ENCODE measurements at regions of chr12 and their contacts with region 1.

Region 1: GRCh38 chr12:104863296-104863948 is 94.7 kb downstream of the SLC41A2 start:
- DNase-seq: no peak
- ATAC-seq: no peak
- H3K4me3 ChIP-seq: no peak overlapping the region
- H3K27ac ChIP-seq: no peak overlapping the region
- H3K4me1 ChIP-seq: no peaks in the 10 kb centered on the region
- H3K27me3 ChIP-seq: no peaks in the 10 kb centered on the region
- CTCF ChIP-seq: no peak
- EP300 ChIP-seq: no peak
- POLR2A ChIP-seq: no peak
- RAD21 ChIP-seq: no peak

Region 2: DNA sequence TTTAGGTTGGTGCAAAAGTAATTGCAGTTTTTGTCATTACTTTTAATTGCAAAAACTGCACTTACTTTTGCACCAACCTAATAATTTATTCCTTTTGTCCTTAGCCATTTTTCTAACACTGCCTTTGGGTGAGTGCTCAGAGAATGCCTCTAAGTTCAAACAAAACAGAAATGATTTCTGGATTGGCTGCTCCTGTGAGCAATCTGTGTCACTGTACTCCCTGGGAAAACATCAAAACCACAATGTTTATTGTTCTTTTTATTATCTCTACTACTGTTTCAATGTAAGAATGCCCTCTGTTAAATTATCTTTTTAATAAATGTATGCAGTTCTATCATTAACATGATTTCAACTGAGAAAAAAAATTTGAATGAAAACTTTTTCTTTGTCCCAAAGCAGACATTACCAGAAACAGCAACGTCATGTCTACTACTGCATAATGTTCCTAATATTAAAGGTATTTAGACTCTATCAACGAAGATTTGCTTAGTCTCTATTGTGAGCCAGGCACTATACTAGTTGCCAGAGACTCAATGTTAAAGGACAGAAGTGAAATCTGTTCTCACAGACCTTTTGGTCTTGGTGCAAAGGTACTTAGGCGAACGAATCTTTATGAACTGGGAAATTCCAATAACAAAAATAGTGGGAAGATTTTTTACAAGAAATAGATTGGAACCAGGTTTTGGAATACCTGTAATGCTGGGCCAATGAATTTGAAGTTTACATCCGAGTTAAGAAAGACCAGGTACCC is 88.5 kb after region 1 on chr12:
- CTCF ChIA-PET with region 1: no interaction called
- POLR2A ChIA-PET with region 1: no interaction called
- in situ Hi-C with region 1: no loop called
- intact Hi-C with region 1: loop called (anchors 5 kb)
- DNase-seq: no peak
- ATAC-seq: no peak
- H3K4me3 ChIP-seq: no peak overlapping the region
- H3K27ac ChIP-seq: no peak overlapping the region
- H3K4me1 ChIP-seq: no peaks in the 10 kb centered on the region
- H3K27me3 ChIP-seq: peaks cover 16 to 32% of the 10 kb centered on the region in 2 experiments
- CTCF ChIP-seq: no peak
- EP300 ChIP-seq: no peak
- POLR2A ChIP-seq: no peak
- RAD21 ChIP-seq: no peak